Panc1 (cell line): ENCODE measurements at regions of chr10 and their contacts with region 1.

Region 1: DNA sequence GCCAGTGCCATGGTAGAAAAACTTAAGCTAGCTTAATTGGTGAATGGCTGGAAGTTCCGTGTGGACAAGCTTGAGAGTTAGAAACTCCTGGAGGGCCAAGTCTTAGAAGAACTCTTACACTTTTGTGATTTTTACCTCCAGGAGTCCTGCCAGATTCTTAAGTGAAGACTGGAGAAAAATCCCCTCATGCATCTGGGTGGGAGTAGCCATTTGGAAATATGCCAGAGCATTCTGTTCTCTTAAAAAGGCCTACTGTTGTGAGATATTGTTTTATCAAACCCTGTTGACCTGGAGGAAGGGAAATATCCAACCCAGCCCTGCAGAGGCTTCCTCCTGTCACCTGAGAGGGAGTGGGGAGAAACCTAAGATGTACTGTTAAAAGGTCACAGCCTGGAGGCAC is 17.6 kb upstream of the MCM10 start:
- DNase-seq: no peak
- ATAC-seq: no peak
- H3K4me3 ChIP-seq: no peak overlapping the region
- H3K27ac ChIP-seq: no peak overlapping the region
- H3K4me1 ChIP-seq: no peaks in the 10 kb centered on the region
- H3K27me3 ChIP-seq: no peaks in the 10 kb centered on the region
- CTCF ChIP-seq: no peak

Region 2: GRCh38 chr10:12971001-12971788 is 172.6 kb before region 1 on chr10:
- CTCF ChIA-PET with region 1: no interaction called
- POLR2A ChIA-PET with region 1: no interaction called
- in situ Hi-C with region 1: no loop called
- intact Hi-C with region 1: no loop called
- DNase-seq: no peak
- ATAC-seq: no peak
- H3K4me3 ChIP-seq: no peak overlapping the region
- H3K27ac ChIP-seq: no peak overlapping the region
- H3K4me1 ChIP-seq: no peaks in the 10 kb centered on the region
- H3K27me3 ChIP-seq: no peaks in the 10 kb centered on the region
- CTCF ChIP-seq: no peak

Region 3: GRCh38 chr10:13160934-13161856 is 17.4 kb after region 1 on chr10 and contains the start of gene MCM10:
- CTCF ChIA-PET with region 1: no interaction called
- POLR2A ChIA-PET with region 1: interaction called, 10 read pairs
- in situ Hi-C with region 1: no loop called
- intact Hi-C with region 1: no loop called
- DNase-seq: peak; percentile 92
- ATAC-seq: peak; percentile 100
- H3K4me3 ChIP-seq: peak within 1 kb of the TSS; percentile 69 to 81
- H3K27ac ChIP-seq: peak within 1 kb of the TSS; percentile 83
- H3K4me1 ChIP-seq: peaks cover 9% of the 10 kb centered on the region; the same call in 1 of the 2 replicates
- H3K27me3 ChIP-seq: no peaks in the 10 kb centered on the region
- CTCF ChIP-seq: peak; percentile 86
- total RNA-seq, gene MCM10: 22.8 TPM

Region 4: DNA sequence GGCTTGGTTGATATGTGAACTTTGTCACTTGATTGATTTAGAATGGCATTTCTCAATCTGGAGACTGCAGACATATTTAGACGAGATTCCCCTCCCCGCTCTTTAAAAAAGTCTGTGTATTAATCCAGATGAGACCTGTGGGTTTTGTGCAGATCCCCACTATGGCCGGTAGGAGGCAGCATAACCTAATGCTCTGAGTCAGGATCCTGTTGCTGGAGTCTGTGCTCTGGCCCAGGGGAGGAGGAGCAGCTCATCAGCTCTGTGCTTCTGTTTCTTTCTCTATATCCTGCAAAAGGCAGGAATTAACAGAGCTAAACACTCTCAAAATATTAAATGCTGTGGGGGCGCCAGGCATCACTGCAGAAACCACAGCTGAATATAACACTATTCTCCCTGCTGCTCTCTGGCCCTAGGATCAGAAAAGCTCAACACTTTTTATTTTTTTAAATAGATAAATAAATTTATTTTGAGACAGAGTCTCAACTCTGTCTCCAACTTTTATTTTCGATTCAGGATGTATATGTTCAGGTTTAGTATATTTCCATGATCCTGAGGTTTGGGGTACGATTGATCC is 228.2 kb after region 1 on chr10:
- CTCF ChIA-PET with region 1: no interaction called
- POLR2A ChIA-PET with region 1: no interaction called
- in situ Hi-C with region 1: no loop called
- intact Hi-C with region 1: no loop called
- DNase-seq: peak; percentile 55
- ATAC-seq: peak; percentile 97
- H3K4me3 ChIP-seq: no peak overlapping the region
- H3K27ac ChIP-seq: no peak overlapping the region
- H3K4me1 ChIP-seq: no peaks in the 10 kb centered on the region
- H3K27me3 ChIP-seq: no peaks in the 10 kb centered on the region
- CTCF ChIP-seq: peak; percentile 90